ENCODE measurements at regions of chr19 and their contacts with region 1.

Region 1: DNA sequence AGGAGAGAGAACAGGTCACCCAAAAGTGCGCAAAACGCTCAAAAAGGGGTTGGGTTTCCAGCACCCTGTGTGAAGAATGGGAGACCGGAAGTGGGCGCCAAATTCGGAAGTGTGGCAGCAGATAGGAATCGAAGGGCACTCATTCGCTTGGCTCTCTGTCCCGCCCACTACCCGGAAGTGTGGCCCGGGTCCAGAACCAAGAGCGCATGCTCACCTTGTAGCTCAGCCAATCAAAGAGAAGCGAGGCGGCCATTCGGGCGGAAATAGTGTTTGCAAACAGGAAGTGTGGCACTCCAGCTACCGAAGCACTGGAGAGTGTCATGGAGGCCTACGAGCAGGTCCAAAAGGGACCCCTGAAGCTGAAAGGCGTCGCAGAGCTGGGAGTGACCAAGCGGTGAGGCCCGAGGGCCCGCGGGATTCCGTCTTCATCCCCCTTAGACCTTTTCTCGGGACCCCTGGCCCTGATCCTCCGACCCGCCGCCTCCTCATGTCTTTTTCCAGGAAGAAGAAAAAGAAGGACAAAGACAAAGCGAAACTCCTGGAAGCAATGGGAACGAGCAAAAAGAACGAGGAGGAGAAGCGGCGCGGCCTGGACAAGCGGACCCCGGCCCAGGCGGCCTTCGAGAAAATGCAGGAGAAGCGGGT is at the start of gene FAM32A:
- DNase-seq: peak; percentile 98
- ATAC-seq: peak; percentile 88
- H3K4me3 ChIP-seq: peak within 1 kb of the TSS; percentile 94 to 97
- H3K27ac ChIP-seq: peak within 1 kb of the TSS; percentile 54
- H3K4me1 ChIP-seq: peaks cover 21 to 41% of the 10 kb centered on the region in 2 experiments
- H3K27me3 ChIP-seq: no peaks in the 10 kb centered on the region
- CTCF ChIP-seq: 0 out of 6 replicates have a peak, but pooled peaks of 1 of the 3 experiments have one; percentile 12
- POLR2A ChIP-seq: peak; percentile 61
- RAD21 ChIP-seq: no peak
- total RNA-seq, gene FAM32A: 61.3 TPM

Region 2: DNA sequence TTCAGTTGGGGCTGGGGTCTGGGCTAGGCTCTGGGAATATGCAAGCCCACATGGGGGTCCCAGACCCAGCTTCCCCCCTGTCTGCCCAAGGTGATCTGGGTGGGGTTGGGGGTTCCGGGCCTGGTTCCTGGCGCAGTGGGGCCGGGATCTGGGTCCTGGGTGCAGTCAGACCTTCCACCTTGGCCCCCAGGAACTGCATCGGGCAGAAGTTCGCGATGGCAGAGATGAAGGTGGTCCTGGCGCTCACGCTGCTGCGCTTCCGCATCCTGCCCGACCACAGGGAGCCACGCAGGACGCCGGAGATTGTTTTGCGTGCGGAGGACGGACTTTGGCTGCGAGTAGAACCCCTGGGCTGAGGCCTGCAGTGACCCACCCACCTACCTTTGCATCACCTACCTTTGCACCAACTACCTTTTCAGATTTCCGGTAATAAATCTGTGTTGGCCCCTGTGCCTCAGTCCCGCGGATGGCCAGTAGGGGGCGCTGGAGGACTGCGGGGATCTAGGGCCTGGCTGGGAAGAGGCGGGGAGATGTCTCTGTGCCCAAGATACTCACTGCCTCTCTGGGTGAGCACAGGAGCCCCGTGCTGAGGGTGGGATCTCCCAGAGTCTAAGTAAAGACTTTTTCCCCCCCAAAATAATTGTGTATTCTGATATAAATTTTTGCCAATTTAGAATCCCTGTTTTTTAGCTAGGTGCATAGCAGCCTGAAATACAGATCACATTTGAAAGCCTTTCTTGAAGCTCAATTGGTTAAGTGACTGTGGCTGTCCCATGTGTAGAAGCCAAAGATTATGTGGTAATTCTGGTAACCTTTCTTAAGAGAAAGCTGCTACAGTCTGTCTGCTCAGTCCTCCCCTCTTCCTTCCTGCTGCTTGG is 556.0 kb before region 1 on chr19:
- CTCF ChIA-PET with region 1: interaction called, 3 read pairs
- POLR2A ChIA-PET with region 1: no interaction called
- RAD21 ChIA-PET with region 1: no interaction called
- intact Hi-C with region 1: loop called (anchors 2 kb)
- DNase-seq: peak; percentile 51
- ATAC-seq: peak; percentile 96
- H3K4me3 ChIP-seq: no peak overlapping the region
- H3K27ac ChIP-seq: no peak overlapping the region
- H3K4me1 ChIP-seq: peaks cover 0 to 4% of the 10 kb centered on the region in 2 experiments; a peak in 1 of 4 replicates
- H3K27me3 ChIP-seq: 0 out of 2 replicates have a peak, but pooled peaks cover 6% of the 10 kb centered on the region
- CTCF ChIP-seq: peak; percentile 90 to 99 (median 97)
- POLR2A ChIP-seq: no peak
- RAD21 ChIP-seq: peak; percentile 96

Region 3: DNA sequence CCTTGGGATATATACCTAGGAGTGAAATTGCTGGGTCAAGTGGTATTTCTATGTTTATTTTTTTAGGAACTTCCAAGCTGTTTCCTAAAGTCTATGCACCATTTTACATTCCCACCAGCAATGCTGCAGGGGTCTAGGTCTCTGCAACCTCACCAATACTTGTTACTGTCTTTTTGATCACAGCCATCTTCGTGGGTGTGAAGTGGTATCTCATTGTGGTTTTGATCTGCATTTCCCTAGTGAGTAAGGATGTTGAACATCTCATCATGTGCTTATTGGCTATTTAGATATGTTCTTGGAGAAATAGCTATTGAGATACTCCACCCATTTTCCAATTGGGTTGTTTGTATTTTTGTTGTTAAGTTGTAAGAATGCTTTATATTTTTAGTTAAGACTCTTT is 454.7 kb before region 1 on chr19:
- CTCF ChIA-PET with region 1: no interaction called
- POLR2A ChIA-PET with region 1: no interaction called
- RAD21 ChIA-PET with region 1: no interaction called
- intact Hi-C with region 1: no loop called
- DNase-seq: no peak
- ATAC-seq: no peak
- H3K4me3 ChIP-seq: no peak overlapping the region
- H3K27ac ChIP-seq: no peak overlapping the region
- H3K4me1 ChIP-seq: no peaks in the 10 kb centered on the region
- H3K27me3 ChIP-seq: peaks cover 4% of the 10 kb centered on the region
- CTCF ChIP-seq: no peak
- POLR2A ChIP-seq: no peak
- RAD21 ChIP-seq: no peak

Region 4: GRCh38 chr19:15836595-15837337 is 348.5 kb before region 1 on chr19:
- CTCF ChIA-PET with region 1: interaction called, 3 read pairs
- POLR2A ChIA-PET with region 1: interaction called, 3 read pairs
- RAD21 ChIA-PET with region 1: no interaction called
- intact Hi-C with region 1: loop called (anchors 5 kb)
- DNase-seq: peak; percentile 96
- ATAC-seq: peak; percentile 83
- H3K4me3 ChIP-seq: peak overlapping the region; percentile 59 to 60
- H3K27ac ChIP-seq: peak overlapping the region; percentile 100
- H3K4me1 ChIP-seq: peaks cover 53 to 90% of the 10 kb centered on the region in 2 experiments
- H3K27me3 ChIP-seq: no peaks in the 10 kb centered on the region
- CTCF ChIP-seq: no peak
- POLR2A ChIP-seq: peak; percentile 68
- RAD21 ChIP-seq: peak; percentile 14; the same call in 1 of the 2 replicates

Region 5: DNA sequence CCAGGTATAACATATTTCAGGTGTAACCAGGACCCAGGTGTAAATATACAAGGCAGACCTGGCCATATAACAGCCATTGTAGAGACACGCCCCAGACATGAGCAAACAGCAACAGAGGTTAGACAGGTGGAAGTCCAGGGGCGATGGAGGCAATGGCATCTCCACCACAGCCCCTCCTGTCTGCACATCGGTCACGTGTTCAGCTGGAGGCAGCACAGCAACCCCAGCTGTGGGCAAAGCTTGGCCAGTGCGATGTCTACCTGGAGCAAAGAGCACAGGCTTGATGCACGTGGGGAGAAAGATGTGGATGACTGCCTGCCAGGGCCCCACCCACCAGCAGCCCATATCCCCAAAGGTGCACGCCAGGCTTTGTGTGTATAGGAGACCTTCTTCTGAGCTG is 291.8 kb before region 1 on chr19:
- CTCF ChIA-PET with region 1: no interaction called
- POLR2A ChIA-PET with region 1: no interaction called
- RAD21 ChIA-PET with region 1: no interaction called
- intact Hi-C with region 1: no loop called
- DNase-seq: no peak
- ATAC-seq: no peak
- H3K4me3 ChIP-seq: no peak overlapping the region
- H3K27ac ChIP-seq: no peak overlapping the region
- H3K4me1 ChIP-seq: 0 out of 4 replicates have a peak, but pooled peaks cover 0 to 4% of the 10 kb centered on the region in 2 experiments
- H3K27me3 ChIP-seq: no peaks in the 10 kb centered on the region
- CTCF ChIP-seq: no peak
- POLR2A ChIP-seq: no peak
- RAD21 ChIP-seq: no peak

Region 6: GRCh38 chr19:16041299-16041990 is 143.8 kb before region 1 on chr19:
- CTCF ChIA-PET with region 1: interaction called, 28 read pairs
- POLR2A ChIA-PET with region 1: interaction called, 9 read pairs
- RAD21 ChIA-PET with region 1: interaction called, 5 to 7 read pairs
- intact Hi-C with region 1: loop called (anchors 1 kb)
- DNase-seq: peak; percentile 49
- ATAC-seq: peak; percentile 99
- H3K4me3 ChIP-seq: peak overlapping the region; percentile 11 to 39; a peak in 3 of 4 replicates
- H3K27ac ChIP-seq: no peak overlapping the region
- H3K4me1 ChIP-seq: peaks cover 0 to 13% of the 10 kb centered on the region in 2 experiments; a peak in 2 of 4 replicates
- H3K27me3 ChIP-seq: no peaks in the 10 kb centered on the region
- CTCF ChIP-seq: peak; percentile 92 to 97 (median 92)
- POLR2A ChIP-seq: no peak
- RAD21 ChIP-seq: peak; percentile 99

Region 7: DNA sequence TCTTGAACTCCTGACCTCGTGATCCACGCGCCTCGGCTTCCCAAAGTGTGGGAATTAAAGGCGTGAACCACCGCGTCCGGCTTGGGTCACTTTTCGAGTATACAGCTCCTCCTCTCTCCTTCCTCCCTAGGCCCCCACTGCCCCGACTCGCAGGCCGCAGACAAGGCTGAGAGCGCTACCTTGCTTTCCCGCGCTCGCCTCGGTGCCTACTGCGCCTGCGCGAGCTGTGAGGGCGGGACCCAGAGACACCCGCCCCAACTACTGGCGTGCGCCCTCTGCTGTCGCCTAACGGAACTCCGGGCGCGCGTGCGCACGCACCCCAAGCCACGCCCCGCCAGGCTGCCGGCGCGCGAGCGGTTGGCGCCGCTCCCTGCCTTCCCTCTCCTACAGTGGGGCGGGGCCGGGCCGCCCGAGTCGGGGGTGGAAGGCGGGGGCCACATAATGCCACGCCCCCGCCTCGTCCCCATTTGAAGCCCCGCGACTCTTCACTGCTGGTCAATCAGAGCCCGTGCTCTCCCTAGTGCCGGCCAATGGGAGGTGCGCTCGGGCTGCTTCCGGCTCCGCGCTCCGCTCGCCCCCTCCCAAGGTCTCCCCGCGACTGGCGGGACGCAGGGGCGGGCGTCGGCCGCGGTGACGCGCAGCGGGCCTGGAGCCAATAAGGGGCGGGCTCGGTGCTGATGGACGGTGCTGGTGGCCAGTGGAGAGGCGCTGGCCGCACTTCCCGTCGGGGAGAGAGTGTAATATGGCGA is 73.9 kb before region 1 on chr19 and contains the start of gene RAB8A:
- CTCF ChIA-PET with region 1: interaction called, 4 read pairs
- POLR2A ChIA-PET with region 1: no interaction called
- RAD21 ChIA-PET with region 1: interaction called in 1 of 2 experiments, 4 read pairs
- intact Hi-C with region 1: loop called (anchors 2 kb)
- DNase-seq: peak; percentile 97
- ATAC-seq: peak; percentile 95
- H3K4me3 ChIP-seq: peak within 1 kb of the TSS; percentile 74 to 97
- H3K27ac ChIP-seq: peak within 1 kb of the TSS; percentile 88
- H3K4me1 ChIP-seq: peaks cover 14 to 37% of the 10 kb centered on the region in 2 experiments
- H3K27me3 ChIP-seq: no peaks in the 10 kb centered on the region
- CTCF ChIP-seq: peak; percentile 77 to 85 (median 85)
- POLR2A ChIP-seq: no peak
- RAD21 ChIP-seq: peak; percentile 78
- total RNA-seq, gene RAB8A: 116 TPM

Region 8: GRCh38 chr19:16272945-16273344 is 87.7 kb after region 1 on chr19:
- CTCF ChIA-PET with region 1: no interaction called
- POLR2A ChIA-PET with region 1: no interaction called
- RAD21 ChIA-PET with region 1: no interaction called
- intact Hi-C with region 1: no loop called
- DNase-seq: no peak
- ATAC-seq: no peak
- H3K4me3 ChIP-seq: no peak overlapping the region
- H3K27ac ChIP-seq: no peak overlapping the region
- H3K4me1 ChIP-seq: no peaks in the 10 kb centered on the region
- H3K27me3 ChIP-seq: no peaks in the 10 kb centered on the region
- CTCF ChIP-seq: no peak
- POLR2A ChIP-seq: no peak
- RAD21 ChIP-seq: no peak

Region 9: GRCh38 chr19:16382775-16383543 is 197.7 kb after region 1 on chr19:
- CTCF ChIA-PET with region 1: interaction called, 11 read pairs
- POLR2A ChIA-PET with region 1: interaction called, 3 read pairs
- RAD21 ChIA-PET with region 1: interaction called in 1 of 2 experiments, 3 read pairs
- intact Hi-C with region 1: no loop called
- DNase-seq: peak; percentile 56
- ATAC-seq: peak; percentile 87
- H3K4me3 ChIP-seq: no peak overlapping the region
- H3K27ac ChIP-seq: no peak overlapping the region
- H3K4me1 ChIP-seq: no peaks in the 10 kb centered on the region
- H3K27me3 ChIP-seq: no peaks in the 10 kb centered on the region
- CTCF ChIP-seq: peak; percentile 75 to 87 (median 75)
- POLR2A ChIP-seq: no peak
- RAD21 ChIP-seq: peak; percentile 97